ENCODE measurements at regions of chr12 and their contacts with region 1.

Region 1: GRCh38 chr12:52691076-52691840 is 11.1 kb upstream of the KRT1 start:
- DNase-seq: peak; percentile 80

Region 2: DNA sequence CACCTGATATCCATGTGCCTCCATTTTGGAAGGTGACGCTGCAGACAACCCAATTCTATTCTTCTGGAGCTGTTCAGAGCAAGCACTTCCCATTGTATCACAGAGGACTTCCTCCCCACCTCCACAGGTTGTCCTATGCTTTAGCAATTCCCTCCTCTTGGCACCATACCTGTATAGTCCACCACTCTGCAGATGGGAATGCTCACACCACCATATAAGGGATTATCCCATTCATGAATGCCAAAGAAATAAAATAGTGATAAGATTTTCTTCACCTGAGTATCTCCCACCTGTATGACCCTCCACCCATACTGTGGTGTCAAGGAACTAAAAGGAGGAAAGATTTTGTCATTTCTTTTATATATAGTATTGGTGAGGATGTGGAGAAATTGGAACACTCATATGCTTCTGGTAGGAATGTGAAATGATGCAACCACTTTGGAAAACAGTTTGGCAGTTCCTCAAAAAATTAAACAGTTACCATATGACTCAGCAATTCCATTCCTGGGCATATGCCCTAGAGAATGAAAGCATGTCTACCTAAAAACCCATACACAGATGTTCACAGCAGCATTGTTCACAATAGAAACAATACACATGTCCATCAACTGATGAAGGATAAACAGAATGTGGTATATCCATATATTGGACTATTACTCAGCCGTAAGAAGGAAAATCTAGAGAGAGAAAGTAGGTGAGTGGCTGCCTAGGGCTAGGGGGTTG is 918.0 kb before region 1 on chr12:
- intact Hi-C with region 1: loop called in 1 of 2 experiments (anchors 5 kb)
- DNase-seq: no peak